Activated naive CD4-positive, alpha-beta T cell treated with anti-CD3 and anti-CD28 coated beads for 36 hours (primary cell): ENCODE measurements at regions of chr1 and their contacts with region 1.

Region 1: DNA sequence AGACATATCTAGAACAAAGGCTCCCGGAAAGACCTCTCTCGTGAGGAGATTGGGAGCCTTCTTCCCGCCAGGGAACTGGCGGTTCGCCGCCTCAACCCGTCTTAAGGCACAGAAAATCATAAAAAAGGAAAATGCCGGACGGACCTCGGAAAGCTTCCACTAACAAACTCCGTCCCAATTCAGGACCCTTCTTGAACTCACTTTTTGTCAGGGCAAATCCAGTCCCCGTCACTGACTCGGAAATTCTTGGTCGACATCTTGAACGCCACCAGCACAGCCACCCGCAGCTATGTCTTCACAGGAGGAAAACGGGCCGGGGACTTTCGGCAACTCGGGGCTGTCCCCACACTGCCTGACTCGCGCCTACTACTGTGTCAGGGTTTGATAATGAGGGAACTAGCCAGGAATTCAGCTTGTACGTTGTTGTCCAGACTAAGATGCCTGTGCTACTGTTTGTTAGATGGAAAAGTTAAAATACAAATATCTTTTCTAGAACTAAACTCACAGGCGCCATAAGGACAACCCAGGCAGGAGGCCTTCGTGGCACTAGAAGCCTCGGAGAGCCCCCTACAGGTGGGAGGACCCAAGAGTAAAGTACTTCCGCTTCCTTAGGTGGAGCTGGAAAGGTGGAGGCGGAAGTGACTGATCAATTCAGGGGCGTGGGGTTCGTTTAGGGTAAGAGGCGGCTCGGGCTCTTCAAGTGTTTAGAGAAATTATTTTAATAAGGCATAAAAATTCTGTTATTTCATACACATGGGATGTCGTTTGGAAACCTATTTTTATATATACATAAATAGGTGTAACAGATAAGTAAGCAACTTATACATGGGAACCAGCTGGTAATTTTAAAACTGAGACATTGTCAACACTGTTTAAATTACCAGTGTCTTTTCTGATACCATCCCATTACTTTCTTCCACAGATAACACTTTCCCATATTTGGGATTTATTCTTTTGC is at the start of gene ZRANB2:
- DNase-seq: peak; percentile 93
- H3K4me3 Mint-ChIP-seq: peak within 1 kb of the TSS; percentile 84
- H3K27ac Mint-ChIP-seq: peak within 1 kb of the TSS; percentile 99
- H3K4me1 Mint-ChIP-seq: peaks cover 23% of the 10 kb centered on the region
- H3K27me3 Mint-ChIP-seq: peaks cover 12% of the 10 kb centered on the region
- total RNA-seq, gene ZRANB2: 107 to 114 TPM

Region 2: GRCh38 chr1:70205434-70206118 is 875.4 kb before region 1 on chr1 and contains the start of gene LRRC40:
- CTCF ChIA-PET with region 1: no interaction called
- intact Hi-C with region 1: loop called (anchors 1 kb)
- DNase-seq: peak; percentile 97
- H3K4me3 Mint-ChIP-seq: peak within 1 kb of the TSS; percentile 96
- H3K27ac Mint-ChIP-seq: peak within 1 kb of the TSS; percentile 95
- H3K4me1 Mint-ChIP-seq: peaks cover 62% of the 10 kb centered on the region
- H3K27me3 Mint-ChIP-seq: no peaks in the 10 kb centered on the region
- total RNA-seq, gene LRRC40: 20.4 to 20.5 TPM

Region 3: GRCh38 chr1:70221241-70222121 is 859.5 kb before region 1 on chr1 and contains the start of gene SRSF11:
- CTCF ChIA-PET with region 1: no interaction called
- intact Hi-C with region 1: loop called (anchors 1 kb)
- DNase-seq: peak; percentile 97
- H3K4me3 Mint-ChIP-seq: peak within 1 kb of the TSS; percentile 93
- H3K27ac Mint-ChIP-seq: peak within 1 kb of the TSS; percentile 97
- H3K4me1 Mint-ChIP-seq: peaks cover 39% of the 10 kb centered on the region
- H3K27me3 Mint-ChIP-seq: no peaks in the 10 kb centered on the region
- total RNA-seq, gene SRSF11: 172 to 173 TPM

Region 4: GRCh38 chr1:70354332-70355110 is 726.5 kb before region 1 on chr1 and contains the start of gene ANKRD13C:
- CTCF ChIA-PET with region 1: no interaction called
- intact Hi-C with region 1: loop called (anchors 1 kb)
- DNase-seq: peak; percentile 97
- H3K4me3 Mint-ChIP-seq: peak within 1 kb of the TSS; percentile 98
- H3K27ac Mint-ChIP-seq: peak within 1 kb of the TSS; percentile 99
- H3K4me1 Mint-ChIP-seq: peaks cover 36% of the 10 kb centered on the region
- H3K27me3 Mint-ChIP-seq: no peaks in the 10 kb centered on the region
- total RNA-seq, gene ANKRD13C: 9.2 to 10.3 TPM

Region 5: DNA sequence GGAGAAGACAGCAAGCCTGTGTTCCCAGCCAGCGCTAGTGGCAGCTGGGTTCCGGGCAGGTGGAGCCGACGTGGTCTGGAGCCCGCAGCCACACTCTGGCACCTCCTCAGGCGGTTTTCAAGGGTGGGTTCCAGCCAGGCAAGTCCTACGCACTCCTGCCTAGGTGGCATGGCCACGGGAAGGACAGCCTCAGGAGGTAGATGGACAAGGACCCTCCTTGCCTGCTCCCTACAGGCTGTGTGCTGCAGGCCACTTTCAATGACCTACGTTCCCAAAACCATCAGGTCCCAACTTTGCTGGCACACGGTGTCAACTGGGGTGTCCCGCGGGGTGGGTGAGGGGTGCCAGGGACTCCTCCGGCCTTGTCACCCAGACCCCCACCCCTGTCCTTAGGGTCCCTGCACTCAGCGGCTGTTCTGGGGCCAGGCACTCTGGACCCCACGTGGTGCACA is 26.7 kb before region 1 on chr1:
- CTCF ChIA-PET with region 1: no interaction called
- intact Hi-C with region 1: no loop called
- DNase-seq: no peak
- H3K4me3 Mint-ChIP-seq: no peak overlapping the region
- H3K27ac Mint-ChIP-seq: no peak overlapping the region
- H3K4me1 Mint-ChIP-seq: no peaks in the 10 kb centered on the region
- H3K27me3 Mint-ChIP-seq: peaks cover 3% of the 10 kb centered on the region

Region 6: DNA sequence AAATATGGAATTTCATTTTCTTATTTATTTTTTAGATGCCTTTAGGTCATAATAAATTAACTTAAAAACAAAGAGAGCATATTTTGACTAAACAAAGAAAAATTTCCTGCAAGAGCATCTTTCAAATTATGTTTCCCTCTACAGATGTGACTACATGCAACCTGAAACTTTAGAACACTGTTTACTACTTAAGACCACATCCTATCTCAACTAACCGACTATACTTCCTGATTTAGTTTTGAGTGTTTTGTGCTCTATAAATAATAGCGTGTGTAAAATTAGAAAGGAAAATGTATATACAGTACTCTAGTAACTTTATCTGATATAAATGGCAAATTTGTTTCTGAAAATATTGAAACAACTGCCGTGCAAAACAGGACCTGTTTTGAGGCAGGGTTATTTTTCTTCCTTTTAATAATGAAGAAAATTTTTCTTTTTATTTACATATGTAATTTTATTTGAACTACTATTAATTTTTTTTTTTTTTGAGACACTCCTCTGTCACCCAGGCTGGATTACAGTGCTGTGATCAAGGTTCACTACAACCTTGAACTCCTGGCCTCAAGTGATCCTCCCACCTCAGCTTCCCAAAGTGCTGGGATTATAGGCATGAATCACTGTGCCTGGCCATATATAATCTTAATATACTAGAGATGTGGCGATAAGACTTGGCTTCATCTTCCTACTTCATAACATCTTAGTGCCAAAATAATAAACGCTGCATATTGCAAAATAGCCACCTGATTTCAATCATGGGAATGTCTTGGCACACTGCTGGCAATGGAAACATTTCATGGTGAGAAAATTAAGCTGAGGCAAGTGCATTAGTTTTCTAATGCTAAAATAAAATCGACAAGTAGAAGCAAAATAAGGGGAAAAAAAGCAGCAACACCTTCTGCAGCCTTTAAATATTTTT is 12.4 kb before region 1 on chr1:
- CTCF ChIA-PET with region 1: interaction called, 4 read pairs
- intact Hi-C with region 1: loop called (anchors 2 kb)
- DNase-seq: no peak
- H3K4me3 Mint-ChIP-seq: no peak overlapping the region
- H3K27ac Mint-ChIP-seq: no peak overlapping the region
- H3K4me1 Mint-ChIP-seq: peaks cover 4% of the 10 kb centered on the region
- H3K27me3 Mint-ChIP-seq: no peaks in the 10 kb centered on the region

Region 7: DNA sequence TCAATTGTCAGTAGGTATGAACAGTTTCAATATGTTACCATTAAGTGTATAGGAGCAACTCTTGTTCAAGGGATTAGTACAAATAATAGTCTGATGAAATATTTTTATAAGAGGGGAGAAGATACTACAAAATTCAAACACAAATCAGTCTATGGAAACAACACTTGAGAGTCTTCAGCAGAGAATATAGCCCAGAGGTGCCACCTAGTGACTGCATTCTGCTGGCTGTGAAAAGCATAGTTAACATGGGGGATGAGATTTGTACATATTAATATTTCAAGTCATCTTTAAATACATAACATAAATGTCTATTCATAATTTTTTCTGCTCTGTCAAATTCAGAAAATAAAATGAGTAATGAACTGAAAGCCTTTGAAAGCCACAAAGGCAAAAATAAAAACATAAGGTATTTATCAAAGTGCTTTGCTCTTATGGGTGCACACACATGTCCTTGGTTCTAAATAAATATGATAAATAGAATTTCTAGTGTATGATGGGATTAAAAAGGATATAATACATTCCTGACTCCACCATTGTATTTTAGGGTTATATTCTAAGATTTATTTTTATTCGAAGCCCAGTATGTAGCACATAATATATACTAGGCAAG is 440.7 kb after region 1 on chr1:
- CTCF ChIA-PET with region 1: no interaction called
- intact Hi-C with region 1: loop called (anchors 5 kb)
- DNase-seq: peak; percentile 36
- H3K4me3 Mint-ChIP-seq: no peak overlapping the region
- H3K27ac Mint-ChIP-seq: no peak overlapping the region
- H3K4me1 Mint-ChIP-seq: no peaks in the 10 kb centered on the region
- H3K27me3 Mint-ChIP-seq: no peaks in the 10 kb centered on the region

Region 8: DNA sequence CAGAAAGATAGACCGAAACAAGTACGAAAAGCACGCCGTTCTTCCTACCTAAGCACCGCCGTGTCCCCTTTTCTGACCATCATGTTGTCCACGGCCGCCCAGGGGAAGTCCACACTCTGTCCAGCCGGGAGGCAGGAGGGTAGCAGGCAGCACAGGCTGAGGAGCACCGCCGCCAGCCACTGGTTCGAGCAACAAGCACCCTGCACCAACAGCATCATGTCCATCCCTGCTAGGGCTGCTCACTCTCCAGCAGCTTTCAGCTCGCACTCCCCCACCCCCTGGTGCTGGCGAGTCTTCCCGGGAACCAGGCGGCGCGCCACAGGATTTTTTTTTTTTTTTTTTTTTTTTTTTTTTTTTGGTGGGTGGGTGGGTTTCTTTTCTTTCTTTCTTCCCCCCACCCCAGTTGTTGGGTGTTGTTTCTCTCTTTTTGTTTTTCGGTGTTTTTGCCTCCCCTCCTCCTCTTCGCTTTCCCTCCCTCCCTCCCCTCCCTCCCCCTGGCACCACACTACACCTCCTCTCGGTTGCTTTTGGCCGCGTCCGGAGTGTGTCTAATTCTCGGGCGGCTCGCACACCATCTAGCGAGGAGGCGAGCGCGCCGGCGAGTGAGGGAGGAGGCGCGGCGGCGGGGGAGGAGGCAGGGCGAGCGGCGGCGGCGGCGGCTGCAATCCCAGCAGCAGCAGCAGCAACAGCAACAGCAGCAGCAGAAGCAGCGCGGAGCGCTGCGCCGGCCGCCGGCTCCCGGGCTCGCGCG is 1201.4 kb after region 1 on chr1 and contains the start of gene NEGR1:
- CTCF ChIA-PET with region 1: no interaction called
- intact Hi-C with region 1: loop called (anchors 2 kb)
- DNase-seq: peak; percentile 56
- H3K4me3 Mint-ChIP-seq: peak within 1 kb of the TSS; percentile 65
- H3K27ac Mint-ChIP-seq: no peak within 1 kb of the TSS
- H3K4me1 Mint-ChIP-seq: peaks cover 17% of the 10 kb centered on the region
- H3K27me3 Mint-ChIP-seq: peaks cover 29% of the 10 kb centered on the region
- total RNA-seq, gene NEGR1: not detected